HepG2 (cell line): ENCODE measurements at regions of chr1 and their contacts with region 1.

Region 1: GRCh38 chr1:197146197-197146889 is at the start of gene ASPM:
- DNase-seq: peak; percentile 91
- ATAC-seq: peak; percentile 98
- H3K4me3 ChIP-seq: peak within 1 kb of the TSS; percentile 76 to 91 (median 84)
- H3K27ac ChIP-seq: peak within 1 kb of the TSS; percentile 75
- H3K4me1 ChIP-seq: peaks cover 57% of the 10 kb centered on the region
- H3K27me3 ChIP-seq: no peaks in the 10 kb centered on the region; a peak in 1 of 5 replicates
- CTCF ChIP-seq: no peak
- EP300 ChIP-seq: no peak
- POLR2A ChIP-seq: peak in 1 of 2 experiments; percentile 45; a peak in 2 of 4 replicates
- RAD21 ChIP-seq: 0 out of 2 replicates have a peak, but pooled peaks have one; percentile 6
- total RNA-seq, gene ASPM: 29.1 and 35.8 TPM in 2 replicates

Region 2: GRCh38 chr1:197173571-197174482 is 27.5 kb after region 1 on chr1:
- CTCF ChIA-PET with region 1: no interaction called
- POLR2A ChIA-PET with region 1: interaction called, 3 read pairs
- in situ Hi-C with region 1: no loop called
- intact Hi-C with region 1: loop called (anchors 2 kb)
- DNase-seq: peak; percentile 91
- ATAC-seq: peak; percentile 96
- H3K4me3 ChIP-seq: peak overlapping the region in 1 of 3 experiments; percentile 8; a peak in 1 of 6 replicates
- H3K27ac ChIP-seq: peak overlapping the region; percentile 72
- H3K4me1 ChIP-seq: peaks cover 53% of the 10 kb centered on the region
- H3K27me3 ChIP-seq: no peaks in the 10 kb centered on the region
- CTCF ChIP-seq: no peak
- EP300 ChIP-seq: peak in 1 of 2 experiments; percentile 91; a peak in 2 of 4 replicates
- POLR2A ChIP-seq: no peak
- RAD21 ChIP-seq: no peak

Region 3: DNA sequence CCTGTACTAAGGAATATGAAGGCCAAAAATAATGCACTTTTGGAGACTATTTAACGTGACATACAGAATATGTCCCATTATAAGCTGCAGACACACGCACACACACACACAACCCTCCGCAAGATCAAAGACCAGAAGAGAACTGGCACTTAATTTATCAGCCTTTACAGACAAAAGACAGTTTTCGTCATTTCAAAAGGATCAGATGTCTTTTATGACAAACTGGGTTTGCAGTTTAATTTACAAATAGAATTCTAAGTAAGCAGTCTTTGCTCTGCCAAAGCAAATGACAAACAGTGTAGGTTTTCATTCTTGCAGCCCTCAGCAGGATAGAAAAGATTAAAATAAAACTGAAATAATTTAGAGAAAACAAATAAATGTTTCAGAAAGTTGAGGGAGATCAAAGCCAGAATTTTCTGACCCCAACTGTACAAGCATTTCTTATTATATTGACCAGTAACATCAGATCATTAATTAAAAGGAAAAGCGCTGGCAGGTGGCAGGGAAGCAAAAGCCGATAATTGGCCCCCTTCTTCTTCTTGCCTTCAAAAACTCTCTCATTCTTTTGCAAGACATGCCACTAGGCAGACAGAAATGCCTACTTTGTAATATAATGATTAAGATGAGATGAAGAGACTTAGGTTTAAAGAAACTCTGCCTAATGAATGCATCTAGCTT is 460.0 kb after region 1 on chr1:
- CTCF ChIA-PET with region 1: no interaction called
- POLR2A ChIA-PET with region 1: no interaction called
- in situ Hi-C with region 1: no loop called
- intact Hi-C with region 1: no loop called
- DNase-seq: no peak
- ATAC-seq: no peak
- H3K4me3 ChIP-seq: no peak overlapping the region
- H3K27ac ChIP-seq: no peak overlapping the region
- H3K4me1 ChIP-seq: peaks cover 8% of the 10 kb centered on the region; the same call in 1 of the 2 replicates
- H3K27me3 ChIP-seq: no peaks in the 10 kb centered on the region
- CTCF ChIP-seq: no peak
- EP300 ChIP-seq: no peak
- POLR2A ChIP-seq: no peak
- RAD21 ChIP-seq: no peak